ENCODE measurements at regions of chr1 and their contacts with region 1.

Region 1: GRCh38 chr1:88357729-88358128 is 326.3 kb upstream of the PKN2 start:
- DNase-seq: no peak
- ATAC-seq: no peak
- H3K4me3 ChIP-seq: no peak overlapping the region
- H3K27ac ChIP-seq: no peak overlapping the region
- H3K4me1 ChIP-seq: no peaks in the 10 kb centered on the region
- H3K27me3 ChIP-seq: no peaks in the 10 kb centered on the region
- CTCF ChIP-seq: no peak
- POLR2A ChIP-seq: no peak
- RAD21 ChIP-seq: no peak

Region 2: DNA sequence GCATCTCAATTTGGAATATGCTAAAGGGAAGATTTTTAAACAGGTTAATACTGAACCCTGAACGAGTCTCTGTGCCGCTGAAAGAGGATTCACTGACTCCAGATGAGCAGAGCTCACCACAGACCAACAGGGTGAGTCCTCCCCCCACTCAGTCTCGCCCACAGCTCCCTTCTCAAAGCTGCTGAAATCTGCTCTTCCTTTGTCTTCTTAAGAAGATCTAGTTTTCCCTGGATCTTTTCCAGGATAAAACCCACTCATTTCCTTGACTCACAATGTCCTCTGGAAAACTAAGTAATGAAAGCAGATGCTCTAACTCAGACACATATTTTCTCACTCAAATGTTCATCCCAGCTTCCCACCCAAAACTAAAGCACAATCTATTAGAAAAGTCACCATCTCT is 120.7 kb before region 1 on chr1:
- CTCF ChIA-PET with region 1: no interaction called
- POLR2A ChIA-PET with region 1: no interaction called
- RAD21 ChIA-PET with region 1: no interaction called
- intact Hi-C with region 1: no loop called
- DNase-seq: no peak
- ATAC-seq: no peak
- H3K4me3 ChIP-seq: no peak overlapping the region
- H3K27ac ChIP-seq: no peak overlapping the region
- H3K4me1 ChIP-seq: no peaks in the 10 kb centered on the region
- H3K27me3 ChIP-seq: no peaks in the 10 kb centered on the region
- CTCF ChIP-seq: no peak
- POLR2A ChIP-seq: no peak
- RAD21 ChIP-seq: no peak

Region 3: GRCh38 chr1:88422037-88422436 is 64.3 kb after region 1 on chr1:
- CTCF ChIA-PET with region 1: no interaction called
- POLR2A ChIA-PET with region 1: no interaction called
- RAD21 ChIA-PET with region 1: no interaction called
- intact Hi-C with region 1: loop called (anchors 10 kb)
- DNase-seq: no peak
- ATAC-seq: no peak
- H3K4me3 ChIP-seq: no peak overlapping the region
- H3K27ac ChIP-seq: no peak overlapping the region
- H3K4me1 ChIP-seq: no peaks in the 10 kb centered on the region
- H3K27me3 ChIP-seq: no peaks in the 10 kb centered on the region
- CTCF ChIP-seq: no peak
- POLR2A ChIP-seq: no peak
- RAD21 ChIP-seq: no peak